ENCODE measurements at regions of chr6 and their contacts with region 1.

Region 1: GRCh38 chr6:17584241-17584803 is 15.8 kb upstream of the FAM8A1 start:
- DNase-seq: no peak
- H3K4me3 ChIP-seq: peak overlapping the region; percentile 22 to 39 (median 22)
- H3K27ac ChIP-seq: peak overlapping the region; percentile 65 to 80 (median 75)
- H3K4me1 ChIP-seq: peaks cover 10 to 21% (median 14%) of the 10 kb centered on the region in 4 donors
- H3K27me3 ChIP-seq: no peaks in the 10 kb centered on the region
- CTCF ChIP-seq: peak; percentile 73 to 96 (median 84)
- EP300 ChIP-seq: no peak
- POLR2A ChIP-seq: no peak

Region 2: GRCh38 chr6:17156112-17156921 is 428.0 kb before region 1 on chr6:
- intact Hi-C with region 1: loop called (anchors 2 kb)
- DNase-seq: peak; percentile 91
- H3K4me3 ChIP-seq: no peak overlapping the region
- H3K27ac ChIP-seq: no peak overlapping the region
- H3K4me1 ChIP-seq: peaks cover 0 to 4% (median 0%) of the 10 kb centered on the region in 4 donors
- H3K27me3 ChIP-seq: no peaks in the 10 kb centered on the region
- CTCF ChIP-seq: peak; percentile 77 to 82 (median 81)
- EP300 ChIP-seq: no peak
- POLR2A ChIP-seq: no peak

Region 3: DNA sequence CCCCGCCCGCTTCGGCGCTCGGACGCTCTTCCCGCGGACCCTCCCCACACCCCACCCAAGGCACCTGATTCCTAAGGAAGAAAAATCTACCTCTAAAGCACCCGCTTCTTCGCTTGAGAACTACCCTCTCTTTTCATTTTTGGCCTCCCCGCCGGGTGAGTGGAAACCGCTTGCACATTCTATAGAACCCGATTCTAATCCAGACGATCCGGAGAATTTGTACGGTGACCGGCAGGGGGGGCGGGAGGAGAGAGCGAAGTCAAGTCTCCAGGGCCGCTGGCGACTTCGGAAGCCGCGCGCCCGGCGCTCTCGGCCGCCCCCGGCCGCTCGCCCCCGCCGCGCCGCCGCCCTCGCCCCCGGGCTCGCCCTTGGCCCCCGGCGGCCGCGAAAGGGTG is 303.2 kb before region 1 on chr6 and contains the start of gene RBM24:
- intact Hi-C with region 1: loop called (anchors 5 kb)
- DNase-seq: no peak
- H3K4me3 ChIP-seq: peak within 1 kb of the TSS; percentile 76 to 93 (median 90)
- H3K27ac ChIP-seq: peak within 1 kb of the TSS; percentile 96 to 99 (median 96)
- H3K4me1 ChIP-seq: peaks cover 10 to 78% (median 65%) of the 10 kb centered on the region in 4 donors
- H3K27me3 ChIP-seq: no peaks in the 10 kb centered on the region
- CTCF ChIP-seq: peak in 1 of 3 experiments; percentile 38
- EP300 ChIP-seq: no peak
- POLR2A ChIP-seq: peak; percentile 8
- total RNA-seq, gene RBM24: 10.9 to 25.5 (median 20.9) TPM

Region 4: DNA sequence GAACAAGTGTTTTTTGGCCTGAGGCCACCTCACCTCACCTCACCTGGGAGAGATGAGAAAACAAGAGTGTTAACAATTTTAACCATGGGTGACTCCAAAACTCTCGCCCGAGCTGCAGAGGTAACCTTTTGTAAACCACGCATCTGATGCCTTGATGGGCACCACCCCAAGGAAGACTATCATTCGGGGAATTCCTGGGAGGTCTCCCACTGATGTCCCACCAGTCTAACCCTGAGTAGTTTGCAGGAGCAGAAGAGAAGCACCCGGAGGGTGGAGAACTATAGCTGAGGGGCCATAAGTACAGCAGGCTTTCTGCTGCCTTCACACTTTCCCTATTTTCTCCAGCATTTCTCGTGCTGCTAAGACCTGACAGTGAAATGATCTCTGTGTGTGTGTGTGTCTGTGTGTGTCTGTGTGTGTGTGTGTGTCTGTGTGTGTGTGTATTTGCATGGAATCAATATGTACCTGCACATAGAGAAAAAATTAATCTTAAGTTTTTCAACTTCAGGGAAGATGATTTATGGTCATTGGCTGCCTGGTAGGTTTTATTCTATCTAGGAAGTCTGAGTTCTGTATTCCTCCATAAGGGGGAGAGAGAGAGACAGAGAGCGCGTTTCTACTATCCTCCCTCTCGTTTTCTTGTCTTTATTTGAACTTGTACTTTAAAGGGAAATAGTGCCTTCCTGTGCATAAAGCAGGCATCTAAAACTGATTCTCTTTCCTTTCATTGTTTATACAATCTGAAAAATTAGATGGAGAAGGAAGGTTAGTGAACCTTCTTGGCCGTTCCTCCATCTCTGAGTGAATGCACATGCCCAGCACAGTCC is 115.1 kb before region 1 on chr6:
- intact Hi-C with region 1: loop called (anchors 2 kb)
- DNase-seq: no peak
- H3K4me3 ChIP-seq: peak overlapping the region in 2 of 4 donors; percentile 4 to 24
- H3K27ac ChIP-seq: peak overlapping the region; percentile 84 to 85 (median 84)
- H3K4me1 ChIP-seq: peaks cover 26 to 57% (median 55%) of the 10 kb centered on the region in 4 donors
- H3K27me3 ChIP-seq: no peaks in the 10 kb centered on the region
- CTCF ChIP-seq: peak; percentile 54 to 70 (median 67)
- EP300 ChIP-seq: no peak
- POLR2A ChIP-seq: no peak

Region 5: GRCh38 chr6:17808609-17809008 is 224.3 kb after region 1 on chr6:
- intact Hi-C with region 1: loop called (anchors 10 kb)
- DNase-seq: no peak
- H3K4me3 ChIP-seq: no peak overlapping the region
- H3K27ac ChIP-seq: no peak overlapping the region
- H3K4me1 ChIP-seq: no peaks in the 10 kb centered on the region
- H3K27me3 ChIP-seq: no peaks in the 10 kb centered on the region
- CTCF ChIP-seq: no peak
- EP300 ChIP-seq: no peak
- POLR2A ChIP-seq: no peak

Measured in esophagus muscularis mucosa (tissue), 4 donors.